H1 (cell line): ENCODE measurements at regions of chr2 and their contacts with region 1.

Region 1: DNA sequence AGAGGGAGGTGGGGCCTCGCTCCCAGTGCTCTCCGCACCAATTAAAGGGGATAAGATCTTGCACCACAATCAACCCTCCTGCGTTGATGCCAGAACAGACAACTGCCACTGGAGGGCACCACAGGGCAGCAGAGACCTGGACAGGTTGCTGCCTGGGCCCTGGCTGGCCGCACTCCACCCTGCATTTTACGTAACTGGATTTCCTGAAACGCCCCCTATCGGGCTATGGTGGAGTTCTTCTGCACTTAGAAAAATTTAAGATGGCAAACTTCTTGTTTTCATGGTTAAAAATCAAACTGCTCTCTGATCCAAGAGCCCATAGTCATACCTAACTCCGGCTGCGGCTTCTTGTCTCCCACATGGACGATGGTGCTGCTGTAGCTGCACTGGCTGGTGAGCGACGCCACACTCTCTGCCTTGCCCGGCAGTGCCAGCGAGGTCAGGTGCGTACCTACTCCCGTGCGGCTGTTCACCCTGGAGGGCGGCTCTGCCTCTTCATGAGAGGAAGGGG is 16.8 kb upstream of the HES6 start:
- DNase-seq: peak; percentile 91 to 93
- H3K4me3 ChIP-seq: no peak overlapping the region
- H3K27ac ChIP-seq: no peak overlapping the region
- H3K4me1 ChIP-seq: no peaks in the 10 kb centered on the region; a peak in 1 of 7 replicates
- H3K27me3 ChIP-seq: no peaks in the 10 kb centered on the region
- CTCF ChIP-seq: peak; percentile 95 to 99 (median 98)
- EP300 ChIP-seq: no peak
- POLR2A ChIP-seq: no peak
- RAD21 ChIP-seq: peak; percentile 86 to 88

Region 2: GRCh38 chr2:238239872-238240751 is 16.5 kb before region 1 on chr2 and contains the start of gene HES6:
- CTCF ChIA-PET with region 1: interaction called, 208 read pairs
- POLR2A ChIA-PET with region 1: interaction called, 21 read pairs
- DNase-seq: peak; percentile 75 to 91
- H3K4me3 ChIP-seq: peak within 1 kb of the TSS; percentile 55 to 81 (median 60)
- H3K27ac ChIP-seq: 0 out of 2 replicates have a peak within 1 kb of the TSS, but pooled peaks have one; percentile 28
- H3K4me1 ChIP-seq: peaks cover 3 to 15% (median 7%) of the 10 kb centered on the region in 4 experiments
- H3K27me3 ChIP-seq: peaks cover 11 to 57% (median 47%) of the 10 kb centered on the region in 4 experiments
- CTCF ChIP-seq: 0 out of 4 replicates have a peak, but pooled peaks of 1 of the 3 experiments have one; percentile 9
- EP300 ChIP-seq: no peak
- POLR2A ChIP-seq: peak in 1 of 2 experiments; percentile 92; a peak in 2 of 3 replicates
- RAD21 ChIP-seq: no peak
- total RNA-seq, gene HES6: 35.2 and 36.3 TPM in 2 replicates

Region 3: DNA sequence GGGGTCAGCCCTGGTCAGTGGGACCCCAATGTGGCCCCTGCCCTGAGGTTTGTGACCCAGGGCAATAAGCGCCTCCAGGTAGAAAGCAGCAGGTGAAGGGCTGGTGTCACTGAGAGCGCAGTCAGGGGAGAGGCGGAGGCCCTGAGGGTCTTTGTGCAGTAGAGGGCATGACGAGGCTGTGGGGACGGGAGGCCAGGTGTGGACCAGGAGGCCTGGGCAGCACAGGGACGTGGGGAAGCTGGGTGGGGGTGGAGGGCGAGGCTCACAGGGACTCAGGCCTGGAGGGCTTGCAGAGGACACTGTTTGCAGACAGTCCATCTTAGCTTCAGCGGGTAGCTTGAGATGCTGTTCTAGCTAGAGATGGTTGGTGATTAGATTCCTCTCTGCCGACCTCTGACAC is 95.7 kb after region 1 on chr2:
- CTCF ChIA-PET with region 1: no interaction called
- POLR2A ChIA-PET with region 1: no interaction called
- DNase-seq: no peak
- H3K4me3 ChIP-seq: no peak overlapping the region
- H3K27ac ChIP-seq: no peak overlapping the region
- H3K4me1 ChIP-seq: no peaks in the 10 kb centered on the region
- H3K27me3 ChIP-seq: no peaks in the 10 kb centered on the region
- CTCF ChIP-seq: no peak
- EP300 ChIP-seq: no peak
- POLR2A ChIP-seq: no peak
- RAD21 ChIP-seq: no peak